GM10248 (cell line): ENCODE measurements at regions of chr7 and their contacts with region 1.

Region 1: GRCh38 chr7:100126931-100127865 is at the start of gene MBLAC1:
- DNase-seq: peak; percentile 91
- CTCF ChIP-seq: peak; percentile 4

Region 2: GRCh38 chr7:100061518-100062193 is 65.5 kb before region 1 on chr7:
- CTCF ChIA-PET with region 1: no interaction called
- POLR2A ChIA-PET with region 1: no interaction called
- DNase-seq: no peak
- CTCF ChIP-seq: no peak

Region 3: GRCh38 chr7:100091411-100092181 is 35.6 kb before region 1 on chr7:
- CTCF ChIA-PET with region 1: no interaction called
- POLR2A ChIA-PET with region 1: no interaction called
- DNase-seq: no peak
- CTCF ChIP-seq: no peak

Region 4: DNA sequence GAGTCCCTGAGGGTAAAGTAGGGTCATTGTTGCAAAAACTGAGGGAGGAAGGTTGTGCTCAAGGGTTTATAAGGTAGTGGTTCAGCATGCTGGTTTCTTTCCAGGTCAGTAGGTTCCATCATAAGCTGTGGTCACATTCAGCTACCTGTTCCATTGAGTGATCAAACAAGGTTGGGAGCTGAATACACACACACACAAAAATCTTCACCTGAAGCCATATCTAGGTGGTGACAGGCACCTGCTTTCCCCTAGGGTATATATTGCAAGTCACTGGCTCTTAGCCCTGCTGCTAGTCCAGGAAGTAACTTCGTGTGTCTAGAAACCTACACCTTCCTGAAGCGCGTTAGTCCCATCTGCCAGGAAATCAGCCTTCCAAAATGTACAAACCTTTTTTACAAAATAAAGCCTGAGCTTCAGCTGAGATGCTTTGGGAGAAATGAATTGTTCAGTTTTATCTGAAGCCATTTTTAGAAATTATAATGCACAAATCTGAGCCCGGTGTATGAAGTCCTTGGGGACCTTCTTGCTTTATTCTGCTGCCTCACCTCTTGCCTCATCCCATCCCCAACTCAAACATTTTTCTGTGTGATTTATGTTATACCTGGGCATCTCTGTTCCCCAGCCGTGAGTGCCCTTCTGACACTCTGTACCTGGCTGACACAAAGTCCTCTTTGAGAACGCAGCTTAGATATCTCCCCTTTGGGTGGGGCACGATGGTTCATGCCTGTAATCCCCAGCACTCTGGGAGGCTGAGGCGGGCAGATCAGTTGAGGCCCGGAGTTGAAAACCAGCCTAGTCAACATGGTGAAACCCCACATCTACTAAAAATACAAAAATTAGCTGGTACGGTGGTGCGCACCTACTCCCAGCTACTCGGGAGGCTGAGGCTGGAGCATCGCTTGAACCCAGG is 10.9 kb after region 1 on chr7:
- CTCF ChIA-PET with region 1: interaction called, 114 read pairs
- POLR2A ChIA-PET with region 1: no interaction called
- DNase-seq: no peak
- CTCF ChIP-seq: no peak

Region 5: DNA sequence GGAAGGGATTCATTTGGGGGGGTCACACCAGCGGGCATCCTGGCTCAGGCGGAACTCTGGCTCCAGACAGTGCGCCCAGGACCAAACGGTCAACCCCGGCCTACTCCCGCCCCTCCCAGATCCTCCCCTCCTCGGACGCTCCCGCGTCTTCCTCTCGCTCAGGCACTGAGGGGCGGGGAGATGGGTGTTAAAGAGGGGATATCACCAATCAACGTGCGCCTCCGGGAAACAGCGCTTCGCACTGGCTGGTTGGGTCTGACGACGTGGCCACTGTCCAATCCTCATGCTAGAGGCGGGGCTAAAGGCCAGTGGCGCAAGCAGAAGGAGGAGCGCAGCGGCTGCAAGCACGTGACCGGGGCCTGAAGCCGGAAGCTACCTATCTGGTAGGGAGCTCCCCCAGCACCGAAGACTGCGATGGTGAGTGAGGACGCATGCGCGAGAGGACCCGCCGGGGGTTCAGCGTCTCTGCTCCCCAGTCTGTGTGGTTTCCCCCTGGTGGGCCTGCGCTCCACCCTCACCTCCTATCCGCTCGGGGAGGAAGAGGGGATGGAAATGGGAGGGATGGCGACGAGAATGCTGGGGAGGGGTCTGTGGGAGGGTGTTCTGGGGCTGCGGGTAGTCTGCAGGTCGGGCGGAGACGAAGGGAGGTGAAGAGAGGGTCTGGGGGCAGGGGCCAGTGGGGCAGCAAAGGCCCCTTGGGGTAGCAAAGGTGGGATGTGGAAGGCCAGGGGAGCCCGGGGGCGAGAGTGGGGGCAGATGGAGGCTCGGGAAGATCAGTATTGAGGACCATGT is 21.6 kb after region 1 on chr7 and contains the start of gene LAMTOR4:
- CTCF ChIA-PET with region 1: interaction called, 114 read pairs
- POLR2A ChIA-PET with region 1: no interaction called
- DNase-seq: peak; percentile 99
- CTCF ChIP-seq: no peak